B cell (primary cell): ENCODE measurements at regions of chr22 and their contacts with region 1.

Region 1: DNA sequence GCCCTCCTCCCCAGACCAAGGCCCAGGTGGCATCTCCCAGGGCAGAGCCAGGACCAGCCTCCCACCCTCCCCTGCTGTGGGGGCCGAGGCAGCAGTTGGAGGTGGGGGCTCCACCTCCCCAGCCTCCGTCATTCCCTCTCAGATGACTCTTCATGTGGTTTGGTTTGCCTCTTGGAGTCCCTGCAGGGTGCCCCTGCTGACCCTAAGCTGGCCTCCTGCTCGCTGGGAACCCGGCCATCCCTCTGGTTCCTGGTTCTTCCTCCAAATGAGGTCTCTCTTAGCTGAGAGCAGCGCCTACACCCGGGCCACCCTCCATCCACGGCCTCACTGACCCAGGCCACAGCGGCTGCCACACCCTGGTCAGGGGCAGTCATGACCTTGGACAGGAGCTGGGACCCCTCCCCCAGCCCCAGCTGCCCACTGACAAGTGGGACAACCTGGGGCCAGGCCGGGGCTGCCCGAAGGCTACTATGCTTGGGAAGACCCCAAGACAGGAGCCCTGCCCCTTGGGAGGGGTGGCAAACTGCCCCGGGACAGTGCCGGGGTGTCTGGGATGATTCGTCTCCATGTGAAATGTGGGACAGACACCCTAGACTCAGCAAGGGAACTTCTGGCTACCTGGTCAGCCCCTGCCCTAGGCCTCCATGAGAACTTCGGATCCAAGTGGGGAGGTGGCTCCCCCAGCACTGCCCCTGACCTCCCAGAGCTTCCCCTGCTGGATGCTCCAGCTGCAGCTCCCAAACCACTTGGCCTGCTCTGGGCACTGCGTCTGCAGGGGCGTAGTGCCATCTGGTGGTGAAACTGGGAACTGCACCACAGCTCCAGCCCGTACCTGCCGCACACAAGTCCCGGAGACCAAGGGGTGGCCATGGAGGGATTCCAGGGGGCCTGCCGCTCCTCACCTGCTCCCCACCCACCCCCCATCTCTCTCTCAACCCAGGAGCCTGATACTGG is 194.5 kb downstream of the IGLL1 start:
- DNase-seq: peak; percentile 87
- ATAC-seq: peak; percentile 92
- H3K4me3 ChIP-seq: no peak overlapping the region
- H3K4me3 Mint-ChIP-seq: no peak overlapping the region
- H3K27ac ChIP-seq: no peak overlapping the region
- H3K27ac Mint-ChIP-seq: no peak overlapping the region
- H3K4me1 ChIP-seq: peaks cover 0 to 3% of the 10 kb centered on the region in 2 donors
- H3K4me1 Mint-ChIP-seq: no peaks in the 10 kb centered on the region
- H3K27me3 ChIP-seq: peaks cover 0 to 22% (median 5%) of the 10 kb centered on the region in 4 experiments
- H3K27me3 Mint-ChIP-seq: peaks cover 12% of the 10 kb centered on the region
- CTCF ChIP-seq: peak; percentile 98

Region 2: GRCh38 chr22:23128269-23129108 is 257.1 kb before region 1 on chr22:
- CTCF ChIA-PET with region 1: interaction called, 13 read pairs
- POLR2A ChIA-PET with region 1: no interaction called
- intact Hi-C with region 1: loop called (anchors 1 kb)
- DNase-seq: peak; percentile 84
- ATAC-seq: peak; percentile 94
- H3K4me3 ChIP-seq: no peak overlapping the region
- H3K4me3 Mint-ChIP-seq: no peak overlapping the region
- H3K27ac ChIP-seq: no peak overlapping the region
- H3K27ac Mint-ChIP-seq: peak overlapping the region; percentile 18
- H3K4me1 ChIP-seq: no peaks in the 10 kb centered on the region
- H3K4me1 Mint-ChIP-seq: peaks cover 4% of the 10 kb centered on the region
- H3K27me3 ChIP-seq: no peaks in the 10 kb centered on the region
- H3K27me3 Mint-ChIP-seq: no peaks in the 10 kb centered on the region
- CTCF ChIP-seq: peak; percentile 90

Region 3: DNA sequence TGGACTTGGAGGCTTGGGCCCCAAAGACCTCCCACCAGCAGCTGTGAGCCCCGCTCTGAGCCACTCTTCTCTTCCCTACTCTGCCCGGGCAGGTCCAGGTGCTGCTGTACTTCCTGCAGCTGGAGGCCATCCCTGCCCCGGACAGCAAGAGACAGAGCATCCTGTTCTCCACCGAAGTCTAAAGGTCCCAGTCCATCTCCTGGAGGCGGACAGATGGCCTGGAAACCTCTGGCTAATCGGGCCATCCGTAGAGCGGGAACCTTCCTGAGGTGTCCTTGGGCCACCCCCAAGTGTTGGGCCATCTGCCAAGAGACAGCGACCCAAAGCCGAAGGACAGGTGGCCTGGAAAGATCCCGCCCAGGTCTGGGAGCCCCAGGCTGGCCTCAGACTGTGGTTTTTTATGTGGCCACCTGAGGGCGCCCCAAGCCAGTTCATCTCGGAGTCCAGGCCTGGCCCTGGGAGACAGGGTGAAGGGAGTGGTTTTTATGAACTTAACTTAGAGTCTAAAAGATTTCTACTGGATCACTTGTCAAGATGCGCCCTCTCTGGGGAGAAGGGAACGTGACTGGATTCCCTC is 70.1 kb before region 1 on chr22:
- CTCF ChIA-PET with region 1: interaction called, 6 read pairs
- POLR2A ChIA-PET with region 1: no interaction called
- intact Hi-C with region 1: loop called (anchors 2 kb)
- DNase-seq: peak; percentile 59
- ATAC-seq: peak; percentile 43
- H3K4me3 ChIP-seq: no peak overlapping the region
- H3K4me3 Mint-ChIP-seq: no peak overlapping the region
- H3K27ac ChIP-seq: no peak overlapping the region
- H3K27ac Mint-ChIP-seq: no peak overlapping the region
- H3K4me1 ChIP-seq: no peaks in the 10 kb centered on the region
- H3K4me1 Mint-ChIP-seq: no peaks in the 10 kb centered on the region
- H3K27me3 ChIP-seq: no peaks in the 10 kb centered on the region
- H3K27me3 Mint-ChIP-seq: no peaks in the 10 kb centered on the region
- CTCF ChIP-seq: peak; percentile 41

Region 4: DNA sequence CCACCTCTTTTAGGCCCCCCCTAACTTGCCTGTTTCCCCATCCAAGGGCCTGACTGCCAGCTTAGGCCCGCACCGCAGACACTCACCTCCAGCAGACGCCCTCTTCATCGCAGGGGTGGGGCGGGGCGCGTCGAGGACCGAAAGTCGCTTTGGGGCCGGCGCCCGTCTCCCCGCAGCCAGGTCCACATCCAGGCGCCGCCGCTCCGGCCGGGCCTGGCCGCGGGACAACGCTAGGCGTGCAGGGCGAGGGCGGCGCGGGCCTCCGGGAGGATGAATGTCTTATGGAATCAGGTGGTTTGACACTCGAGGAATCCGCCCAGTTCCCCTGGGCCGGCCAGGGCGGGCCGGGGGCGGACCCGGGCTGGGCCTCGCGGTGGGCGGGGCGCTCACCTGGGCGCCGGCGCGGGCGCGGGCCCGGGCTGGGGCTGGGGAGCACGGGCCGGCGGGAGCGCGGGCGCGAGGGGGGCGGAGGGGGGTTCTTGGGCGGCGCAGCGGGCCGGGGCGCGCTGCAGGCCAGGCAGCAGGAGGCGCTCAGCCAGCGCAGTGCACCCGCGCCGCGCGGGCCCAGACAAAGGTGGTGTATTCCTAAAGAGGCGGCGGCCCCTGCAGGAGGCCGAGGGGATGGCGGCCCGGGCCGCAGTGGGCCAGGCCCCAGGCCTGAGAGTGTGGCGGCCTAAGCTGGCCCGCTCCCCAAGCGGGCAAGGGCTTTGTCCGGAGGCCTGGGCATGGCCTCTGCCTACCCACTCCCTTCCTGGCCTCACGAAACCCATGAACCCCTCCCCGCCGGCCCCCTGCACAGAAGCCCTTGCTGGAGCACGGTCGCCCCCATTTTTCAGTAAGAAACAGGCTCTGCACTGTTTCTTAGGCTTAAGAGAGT is 16.9 kb after region 1 on chr22:
- CTCF ChIA-PET with region 1: no interaction called
- POLR2A ChIA-PET with region 1: no interaction called
- intact Hi-C with region 1: loop called (anchors 1 kb)
- DNase-seq: peak; percentile 82
- ATAC-seq: peak; percentile 93
- H3K4me3 ChIP-seq: peak overlapping the region in 3 of 5 experiments; percentile 37 to 55 (median 44)
- H3K4me3 Mint-ChIP-seq: peak overlapping the region; percentile 69
- H3K27ac ChIP-seq: no peak overlapping the region
- H3K27ac Mint-ChIP-seq: no peak overlapping the region
- H3K4me1 ChIP-seq: peaks cover 4% of the 10 kb centered on the region in 2 donors
- H3K4me1 Mint-ChIP-seq: peaks cover 1% of the 10 kb centered on the region
- H3K27me3 ChIP-seq: peaks cover 0 to 2% (median 0%) of the 10 kb centered on the region in 4 experiments
- H3K27me3 Mint-ChIP-seq: peaks cover 4% of the 10 kb centered on the region
- CTCF ChIP-seq: peak; percentile 71

Region 5: GRCh38 chr22:23604939-23605712 is 219.6 kb after region 1 on chr22:
- CTCF ChIA-PET with region 1: no interaction called
- POLR2A ChIA-PET with region 1: no interaction called
- intact Hi-C with region 1: no loop called
- DNase-seq: no peak
- ATAC-seq: no peak
- H3K4me3 ChIP-seq: no peak overlapping the region
- H3K4me3 Mint-ChIP-seq: no peak overlapping the region
- H3K27ac ChIP-seq: no peak overlapping the region
- H3K27ac Mint-ChIP-seq: no peak overlapping the region
- H3K4me1 ChIP-seq: no peaks in the 10 kb centered on the region
- H3K4me1 Mint-ChIP-seq: no peaks in the 10 kb centered on the region
- H3K27me3 ChIP-seq: no peaks in the 10 kb centered on the region
- H3K27me3 Mint-ChIP-seq: no peaks in the 10 kb centered on the region
- CTCF ChIP-seq: no peak